A673 (cell line): ENCODE measurements at regions of chr12 and their contacts with region 1.

Region 1: GRCh38 chr12:7731486-7731885 is 15.7 kb downstream of the CLEC4C start:
- DNase-seq: no peak
- H3K4me3 ChIP-seq: no peak overlapping the region
- H3K27ac ChIP-seq: no peak overlapping the region
- H3K4me1 ChIP-seq: no peaks in the 10 kb centered on the region
- H3K27me3 ChIP-seq: no peaks in the 10 kb centered on the region
- CTCF ChIP-seq: no peak

Region 2: DNA sequence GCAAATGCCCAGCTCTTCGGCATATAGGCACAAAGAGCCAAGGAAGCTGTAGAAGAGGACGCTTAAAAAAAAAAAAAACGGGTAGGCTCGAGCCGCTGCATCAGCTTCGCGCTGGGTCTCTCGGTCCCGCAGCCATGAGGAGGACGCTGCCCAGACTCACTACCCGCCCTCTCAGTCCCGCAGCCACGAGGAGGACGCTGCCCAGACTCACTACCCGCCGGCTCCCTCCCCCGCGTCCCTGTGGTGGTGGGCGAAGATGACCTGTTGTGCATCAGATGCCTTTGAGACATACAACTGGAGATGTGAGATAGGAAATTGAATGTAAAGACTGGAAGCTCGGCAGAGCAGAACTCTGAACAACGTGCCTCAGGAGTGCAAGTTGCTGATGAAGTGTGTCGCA is 846.9 kb before region 1 on chr12:
- CTCF ChIA-PET with region 1: no interaction called
- POLR2A ChIA-PET with region 1: no interaction called
- intact Hi-C with region 1: loop called (anchors 5 kb)
- DNase-seq: no peak
- H3K4me3 ChIP-seq: no peak overlapping the region
- H3K27ac ChIP-seq: no peak overlapping the region
- H3K4me1 ChIP-seq: no peaks in the 10 kb centered on the region
- H3K27me3 ChIP-seq: no peaks in the 10 kb centered on the region
- CTCF ChIP-seq: no peak

Region 3: GRCh38 chr12:7197841-7198240 is 533.6 kb before region 1 on chr12:
- CTCF ChIA-PET with region 1: no interaction called
- POLR2A ChIA-PET with region 1: no interaction called
- intact Hi-C with region 1: no loop called
- DNase-seq: no peak
- H3K4me3 ChIP-seq: no peak overlapping the region
- H3K27ac ChIP-seq: no peak overlapping the region
- H3K4me1 ChIP-seq: no peaks in the 10 kb centered on the region
- H3K27me3 ChIP-seq: no peaks in the 10 kb centered on the region
- CTCF ChIP-seq: no peak

Region 4: DNA sequence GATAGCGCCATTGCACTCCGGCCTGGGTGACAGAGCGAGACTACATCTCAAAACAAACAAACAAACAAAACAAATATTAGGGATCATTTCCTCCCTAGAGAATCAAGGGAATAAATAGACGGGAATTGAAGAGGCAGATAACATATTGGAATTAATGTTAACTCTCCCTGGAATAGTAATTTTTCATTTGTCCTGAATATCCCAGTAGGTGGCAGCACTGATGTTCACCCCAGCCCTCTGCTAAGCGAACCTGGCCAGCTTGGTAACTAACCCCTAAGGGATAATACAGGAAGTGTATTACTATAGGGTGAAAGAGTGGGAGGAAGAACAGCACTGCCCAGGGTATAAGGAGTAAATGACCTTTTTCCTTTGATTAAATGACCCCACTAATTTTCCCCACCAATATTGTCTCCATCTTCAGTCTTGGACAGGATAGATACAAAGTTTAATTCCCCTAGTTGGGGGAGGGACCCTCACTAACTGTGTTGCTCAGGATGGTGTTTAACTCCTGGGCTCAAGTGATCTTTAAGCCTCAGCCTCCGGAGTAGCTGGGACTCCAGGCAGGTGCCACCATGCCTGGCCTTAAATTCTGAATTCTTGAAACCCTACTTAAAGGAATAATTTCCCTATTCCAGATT is 100.7 kb after region 1 on chr12:
- CTCF ChIA-PET with region 1: no interaction called
- POLR2A ChIA-PET with region 1: no interaction called
- intact Hi-C with region 1: no loop called
- DNase-seq: peak; percentile 79
- H3K4me3 ChIP-seq: no peak overlapping the region
- H3K27ac ChIP-seq: no peak overlapping the region
- H3K4me1 ChIP-seq: peaks cover 5% of the 10 kb centered on the region
- H3K27me3 ChIP-seq: no peaks in the 10 kb centered on the region
- CTCF ChIP-seq: peak; percentile 76